Thyroid gland (tissue), 4 donors: ENCODE measurements at regions of chr5 and their contacts with region 1.

Region 1: DNA sequence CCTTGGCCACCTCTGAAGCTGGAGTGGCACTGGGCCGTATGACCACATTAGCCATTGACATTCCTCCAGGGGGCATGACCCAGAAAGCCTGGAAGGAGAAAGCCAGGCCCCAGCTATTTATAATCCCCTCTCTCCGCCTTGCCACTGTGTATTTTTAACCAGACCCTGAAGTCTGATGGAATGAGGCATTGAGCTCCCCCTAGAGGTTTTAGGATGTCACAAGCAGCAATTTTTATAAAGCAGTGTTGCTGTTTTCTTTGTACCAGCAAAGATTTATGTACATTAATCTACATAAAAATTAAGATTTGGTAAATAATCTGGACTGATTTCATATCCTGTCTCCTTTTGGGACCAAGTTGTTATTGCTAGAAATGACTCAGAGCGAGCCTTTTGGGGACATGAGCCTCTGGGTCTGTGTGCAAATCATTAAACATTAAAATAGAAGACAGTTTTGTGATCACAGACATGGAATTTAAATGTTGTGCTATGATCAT is 127.1 kb downstream of the TRIO start:
- DNase-seq: peak; percentile 23 to 27
- H3K4me3 ChIP-seq: no peak overlapping the region
- H3K27ac ChIP-seq: peak overlapping the region in 1 of 3 donors; percentile 44
- H3K4me1 ChIP-seq: peaks cover 30 to 32% of the 10 kb centered on the region in 2 donors
- H3K27me3 ChIP-seq: no peaks in the 10 kb centered on the region
- CTCF ChIP-seq: peak; percentile 30 to 82 (median 76)
- POLR2A ChIP-seq: no peak

Region 2: GRCh38 chr5:13987843-13988464 is 282.3 kb before region 1 on chr5:
- intact Hi-C with region 1: loop called (anchors 5 kb)
- DNase-seq: peak; percentile 52 to 58
- H3K4me3 ChIP-seq: no peak overlapping the region
- H3K27ac ChIP-seq: no peak overlapping the region
- H3K4me1 ChIP-seq: no peaks in the 10 kb centered on the region
- H3K27me3 ChIP-seq: no peaks in the 10 kb centered on the region
- CTCF ChIP-seq: peak; percentile 36 to 92 (median 79)
- POLR2A ChIP-seq: no peak

Region 3: DNA sequence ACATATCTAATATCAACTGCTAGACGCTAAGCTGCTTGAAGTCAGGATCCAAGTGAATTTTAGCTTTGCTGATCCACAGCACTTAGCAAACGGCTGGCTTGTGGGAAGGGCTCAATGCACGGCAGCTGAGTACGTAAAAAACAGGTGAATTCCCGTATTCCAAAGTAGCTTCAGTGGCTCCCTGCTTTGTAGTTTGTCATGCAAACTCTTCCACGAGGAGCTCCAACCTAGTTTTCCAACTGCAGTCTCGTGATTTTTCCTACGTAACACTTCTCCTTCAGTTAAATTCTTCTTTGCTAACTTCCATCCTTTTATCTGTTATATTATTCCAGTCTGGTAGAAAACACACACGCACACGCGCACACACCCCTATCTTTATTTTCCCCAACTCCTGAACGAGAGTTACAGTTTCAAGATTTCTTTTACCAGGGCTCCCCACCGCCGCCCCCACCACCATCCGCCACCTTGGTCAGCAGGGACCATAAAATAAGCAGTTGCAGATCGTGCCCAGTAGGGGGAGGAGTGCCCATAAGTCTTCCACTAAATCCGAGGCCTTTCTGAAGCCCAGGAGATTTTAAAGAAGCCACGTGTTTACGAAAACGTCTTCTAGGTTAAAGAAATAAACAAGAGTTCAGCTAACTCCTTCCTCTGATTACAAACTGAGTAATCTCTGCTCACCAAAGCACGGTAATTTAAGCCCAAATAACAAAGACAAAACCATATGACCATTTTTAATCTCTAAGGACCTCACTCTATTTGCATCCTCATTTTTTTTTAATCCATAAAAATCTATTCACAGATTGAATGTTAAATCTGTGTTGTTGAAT is 161.9 kb before region 1 on chr5:
- intact Hi-C with region 1: loop called (anchors 5 kb)
- DNase-seq: peak; percentile 56 to 59
- H3K4me3 ChIP-seq: no peak overlapping the region
- H3K27ac ChIP-seq: no peak overlapping the region
- H3K4me1 ChIP-seq: no peaks in the 10 kb centered on the region
- H3K27me3 ChIP-seq: no peaks in the 10 kb centered on the region
- CTCF ChIP-seq: peak in 5 of 6 experiments; percentile 55 to 80 (median 63)
- POLR2A ChIP-seq: no peak

Region 4: GRCh38 chr5:14882658-14883580 is 612.7 kb after region 1 on chr5:
- intact Hi-C with region 1: no loop called
- DNase-seq: peak; percentile 17 to 26
- H3K4me3 ChIP-seq: no peak overlapping the region
- H3K27ac ChIP-seq: no peak overlapping the region
- H3K4me1 ChIP-seq: peaks cover 0 to 5% of the 10 kb centered on the region in 2 donors
- H3K27me3 ChIP-seq: no peaks in the 10 kb centered on the region
- CTCF ChIP-seq: no peak
- POLR2A ChIP-seq: no peak